IMR-90 (cell line): ENCODE measurements at regions of chr4 and their contacts with region 1.

Region 1: DNA sequence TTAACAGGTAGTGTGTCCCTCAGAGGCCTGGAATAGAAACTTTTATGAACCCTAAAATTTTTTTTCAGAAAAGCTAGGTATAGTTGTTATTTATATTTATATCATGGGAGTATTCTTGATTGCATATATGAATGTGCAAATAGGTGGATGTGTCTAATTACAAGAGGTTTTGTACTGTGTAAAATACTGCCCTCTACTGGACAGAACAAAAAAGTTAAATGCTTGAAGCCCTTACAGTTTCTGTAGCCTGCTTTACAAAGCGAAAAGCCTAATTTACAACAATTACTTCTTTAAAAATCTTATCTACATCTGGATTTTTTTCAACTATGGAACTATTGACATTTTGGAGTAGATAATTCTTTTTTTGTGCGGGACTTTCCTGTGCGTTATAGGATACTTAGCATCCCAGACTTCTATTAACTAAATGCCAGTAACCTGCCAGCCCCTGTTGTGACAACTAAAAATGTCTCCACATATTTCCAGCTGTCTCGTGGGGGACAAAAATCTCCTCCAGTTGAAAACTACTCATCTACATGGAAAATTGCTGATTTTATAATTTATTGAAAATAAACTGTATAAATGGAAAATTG is 35.1 kb downstream of the ENPEP start:
- DNase-seq: peak; percentile 67
- ATAC-seq: peak; percentile 75
- H3K4me3 ChIP-seq: no peak overlapping the region
- H3K27ac ChIP-seq: no peak overlapping the region
- H3K4me1 ChIP-seq: no peaks in the 10 kb centered on the region
- H3K27me3 ChIP-seq: no peaks in the 10 kb centered on the region
- CTCF ChIP-seq: peak; percentile 67
- POLR2A ChIP-seq: no peak
- RAD21 ChIP-seq: peak; percentile 60

Region 2: GRCh38 chr4:110005461-110006056 is 505.5 kb before region 1 on chr4:
- CTCF ChIA-PET with region 1: interaction called, 52 read pairs
- POLR2A ChIA-PET with region 1: no interaction called
- dilution Hi-C with region 1: no loop called
- in situ Hi-C with region 1: no loop called
- intact Hi-C with region 1: loop called (anchors 1 kb)
- DNase-seq: peak; percentile 78
- ATAC-seq: peak; percentile 67
- H3K4me3 ChIP-seq: no peak overlapping the region
- H3K27ac ChIP-seq: no peak overlapping the region
- H3K4me1 ChIP-seq: no peaks in the 10 kb centered on the region
- H3K27me3 ChIP-seq: no peaks in the 10 kb centered on the region
- CTCF ChIP-seq: peak; percentile 95
- POLR2A ChIP-seq: no peak
- RAD21 ChIP-seq: peak; percentile 95

Region 3: GRCh38 chr4:110196206-110196870 is 314.7 kb before region 1 on chr4:
- CTCF ChIA-PET with region 1: no interaction called
- POLR2A ChIA-PET with region 1: interaction called, 3 read pairs
- dilution Hi-C with region 1: no loop called
- in situ Hi-C with region 1: loop called (anchors 10 kb)
- intact Hi-C with region 1: loop called (anchors 5 kb)
- DNase-seq: peak; percentile 32
- ATAC-seq: peak; percentile 53
- H3K4me3 ChIP-seq: peak overlapping the region; percentile 76
- H3K27ac ChIP-seq: peak overlapping the region; percentile 69
- H3K4me1 ChIP-seq: no peaks in the 10 kb centered on the region
- H3K27me3 ChIP-seq: no peaks in the 10 kb centered on the region
- CTCF ChIP-seq: no peak
- POLR2A ChIP-seq: no peak
- RAD21 ChIP-seq: no peak

Region 4: DNA sequence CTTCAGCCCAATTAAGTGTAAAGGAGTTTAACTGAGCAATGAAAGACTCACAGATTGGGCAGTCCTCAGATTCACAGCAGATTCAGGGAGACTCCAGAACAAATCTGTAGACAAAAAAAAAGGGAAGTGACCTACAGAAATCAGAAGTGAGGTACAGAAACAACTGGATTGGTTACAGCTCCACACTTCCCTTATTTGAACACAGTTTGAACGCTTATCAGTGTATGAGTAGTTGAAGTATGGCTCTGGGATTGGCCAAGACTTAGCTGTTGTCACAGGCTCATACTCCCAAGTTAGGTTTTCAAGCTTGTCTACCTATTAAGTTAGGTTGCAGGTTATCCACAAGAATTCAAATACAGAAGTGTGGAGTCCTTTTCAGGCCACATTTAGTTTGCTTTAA is 200.3 kb before region 1 on chr4:
- CTCF ChIA-PET with region 1: interaction called, 3 read pairs
- POLR2A ChIA-PET with region 1: no interaction called
- dilution Hi-C with region 1: no loop called
- in situ Hi-C with region 1: loop called (anchors 25 kb)
- intact Hi-C with region 1: loop called (anchors 1 kb)
- DNase-seq: no peak
- ATAC-seq: no peak
- H3K4me3 ChIP-seq: no peak overlapping the region
- H3K27ac ChIP-seq: no peak overlapping the region
- H3K4me1 ChIP-seq: no peaks in the 10 kb centered on the region
- H3K27me3 ChIP-seq: peaks cover 2% of the 10 kb centered on the region; the same call in 1 of the 2 replicates
- CTCF ChIP-seq: no peak
- POLR2A ChIP-seq: no peak
- RAD21 ChIP-seq: no peak